T-cell (primary cell): ENCODE measurements at regions of chr7 and their contacts with region 1.

Region 1: DNA sequence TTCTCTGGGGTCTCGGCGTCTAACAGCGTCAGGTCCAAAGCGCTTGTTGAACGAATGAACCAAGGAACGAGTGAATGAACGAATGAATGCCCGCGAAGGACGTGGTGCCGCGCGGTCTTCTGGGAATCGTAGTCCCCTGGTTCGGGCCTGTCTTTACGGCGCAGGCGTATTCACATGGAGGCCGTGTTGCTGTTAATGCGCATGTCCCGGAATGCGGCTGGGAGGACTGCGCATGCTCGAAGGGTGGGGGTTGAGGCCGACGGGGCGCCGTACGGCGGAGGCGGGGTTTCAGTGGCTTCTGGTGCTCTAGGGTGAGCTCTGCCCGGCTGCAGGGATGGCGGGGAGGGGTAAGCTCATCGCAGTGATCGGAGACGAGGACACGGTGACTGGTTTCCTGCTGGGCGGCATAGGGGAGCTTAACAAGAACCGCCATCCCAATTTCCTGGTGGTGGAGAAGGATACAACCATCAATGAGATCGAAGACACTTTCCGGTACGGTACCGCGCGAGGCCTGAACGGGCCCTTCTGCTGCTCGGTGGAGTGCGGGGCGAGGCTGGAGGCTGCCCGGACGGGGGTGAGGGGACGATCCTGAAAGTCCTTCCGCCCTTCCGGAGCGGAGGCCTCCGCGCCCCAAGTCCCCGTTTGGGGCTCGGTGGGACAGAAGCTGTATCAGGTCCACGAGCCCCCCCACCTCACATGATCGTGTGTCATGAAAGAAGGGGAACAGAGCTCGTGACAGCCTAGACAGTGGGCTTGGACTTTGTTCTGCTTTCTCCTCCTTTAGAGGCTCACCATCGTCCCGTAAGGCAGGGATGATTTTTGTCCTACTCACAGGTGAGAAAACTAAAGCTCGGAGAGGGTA is at the start of gene ATP6V1F:
- DNase-seq: peak; percentile 94 to 100 (median 98)
- ATAC-seq: peak; percentile 92 to 95 (median 94)
- H3K4me3 ChIP-seq: peak within 1 kb of the TSS; percentile 88 to 98
- H3K4me3 Mint-ChIP-seq: peak within 1 kb of the TSS; percentile 95 to 96 (median 96)
- H3K27ac ChIP-seq: peak within 1 kb of the TSS; percentile 61
- H3K27ac Mint-ChIP-seq: peak within 1 kb of the TSS; percentile 90 to 92
- H3K4me1 ChIP-seq: peaks cover 5 to 26% of the 10 kb centered on the region in 2 experiments
- H3K4me1 Mint-ChIP-seq: peaks cover 26 to 36% (median 35%) of the 10 kb centered on the region in 3 donors
- H3K27me3 ChIP-seq: no peaks in the 10 kb centered on the region
- H3K27me3 Mint-ChIP-seq: no peaks in the 10 kb centered on the region
- total RNA-seq, gene ATP6V1F: 62.6 to 78.1 (median 75.5) TPM

Region 2: GRCh38 chr7:127589896-127590295 is 1272.9 kb before region 1 on chr7:
- CTCF ChIA-PET with region 1: no interaction called
- POLR2A ChIA-PET with region 1: interaction called in 1 of 2 experiments, 14 read pairs
- DNase-seq: no peak
- ATAC-seq: no peak
- H3K4me3 ChIP-seq: no peak overlapping the region
- H3K4me3 Mint-ChIP-seq: peak overlapping the region; percentile 91 to 92 (median 91)
- H3K27ac ChIP-seq: no peak overlapping the region
- H3K27ac Mint-ChIP-seq: no peak overlapping the region
- H3K4me1 ChIP-seq: peaks cover 4 to 35% of the 10 kb centered on the region in 2 experiments
- H3K4me1 Mint-ChIP-seq: peaks cover 36 to 44% (median 38%) of the 10 kb centered on the region in 3 donors
- H3K27me3 ChIP-seq: no peaks in the 10 kb centered on the region
- H3K27me3 Mint-ChIP-seq: no peaks in the 10 kb centered on the region

Region 3: DNA sequence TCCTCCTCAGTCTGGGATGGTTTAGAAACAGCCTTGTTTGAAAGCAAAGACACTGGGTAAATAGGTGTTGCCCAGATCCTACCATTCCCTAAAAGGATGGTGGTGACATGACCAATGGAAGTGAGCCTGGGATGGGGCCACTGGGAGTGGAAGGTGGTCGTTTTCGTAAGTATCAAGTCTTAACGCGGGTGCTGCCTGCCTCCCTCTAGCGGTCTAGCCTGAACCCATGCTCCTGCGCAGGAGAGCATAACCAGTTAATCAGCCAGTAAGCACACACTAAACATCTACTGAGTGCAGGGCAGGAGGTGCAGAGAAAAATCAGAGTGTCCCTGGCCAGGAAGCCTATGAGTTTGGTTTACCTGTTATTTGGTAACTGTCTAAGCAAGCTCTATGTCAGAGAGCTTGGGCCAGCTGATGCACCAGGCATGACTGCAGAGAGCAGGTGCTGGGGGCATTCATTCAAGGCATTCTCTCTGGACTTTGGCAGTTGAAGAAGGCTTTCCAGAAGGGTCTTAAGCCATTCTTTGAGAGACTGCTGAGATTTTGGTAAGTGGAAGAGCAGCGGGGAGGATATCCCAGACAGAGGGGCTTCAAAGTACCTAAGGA is 189.8 kb before region 1 on chr7:
- CTCF ChIA-PET with region 1: no interaction called
- POLR2A ChIA-PET with region 1: no interaction called
- DNase-seq: peak in 9 of 35 experiments; percentile 3 to 28 (median 8)
- ATAC-seq: peak; percentile 23 to 61 (median 42)
- H3K4me3 ChIP-seq: no peak overlapping the region
- H3K4me3 Mint-ChIP-seq: no peak overlapping the region
- H3K27ac ChIP-seq: no peak overlapping the region
- H3K27ac Mint-ChIP-seq: no peak overlapping the region
- H3K4me1 ChIP-seq: peaks cover 0 to 5% of the 10 kb centered on the region in 2 experiments
- H3K4me1 Mint-ChIP-seq: peaks cover 4 to 10% (median 7%) of the 10 kb centered on the region in 3 donors
- H3K27me3 ChIP-seq: peaks cover 4 to 35% of the 10 kb centered on the region in 2 experiments
- H3K27me3 Mint-ChIP-seq: peaks cover 10 to 23% of the 10 kb centered on the region in 2 donors

Region 4: GRCh38 chr7:128705891-128706333 is 156.9 kb before region 1 on chr7:
- CTCF ChIA-PET with region 1: no interaction called
- POLR2A ChIA-PET with region 1: no interaction called
- DNase-seq: no peak
- ATAC-seq: no peak
- H3K4me3 ChIP-seq: no peak overlapping the region
- H3K4me3 Mint-ChIP-seq: no peak overlapping the region
- H3K27ac ChIP-seq: no peak overlapping the region
- H3K27ac Mint-ChIP-seq: no peak overlapping the region
- H3K4me1 ChIP-seq: no peaks in the 10 kb centered on the region
- H3K4me1 Mint-ChIP-seq: peaks cover 0 to 6% (median 0%) of the 10 kb centered on the region in 3 donors
- H3K27me3 ChIP-seq: no peaks in the 10 kb centered on the region
- H3K27me3 Mint-ChIP-seq: peaks cover 3 to 5% of the 10 kb centered on the region in 2 donors

Region 5: DNA sequence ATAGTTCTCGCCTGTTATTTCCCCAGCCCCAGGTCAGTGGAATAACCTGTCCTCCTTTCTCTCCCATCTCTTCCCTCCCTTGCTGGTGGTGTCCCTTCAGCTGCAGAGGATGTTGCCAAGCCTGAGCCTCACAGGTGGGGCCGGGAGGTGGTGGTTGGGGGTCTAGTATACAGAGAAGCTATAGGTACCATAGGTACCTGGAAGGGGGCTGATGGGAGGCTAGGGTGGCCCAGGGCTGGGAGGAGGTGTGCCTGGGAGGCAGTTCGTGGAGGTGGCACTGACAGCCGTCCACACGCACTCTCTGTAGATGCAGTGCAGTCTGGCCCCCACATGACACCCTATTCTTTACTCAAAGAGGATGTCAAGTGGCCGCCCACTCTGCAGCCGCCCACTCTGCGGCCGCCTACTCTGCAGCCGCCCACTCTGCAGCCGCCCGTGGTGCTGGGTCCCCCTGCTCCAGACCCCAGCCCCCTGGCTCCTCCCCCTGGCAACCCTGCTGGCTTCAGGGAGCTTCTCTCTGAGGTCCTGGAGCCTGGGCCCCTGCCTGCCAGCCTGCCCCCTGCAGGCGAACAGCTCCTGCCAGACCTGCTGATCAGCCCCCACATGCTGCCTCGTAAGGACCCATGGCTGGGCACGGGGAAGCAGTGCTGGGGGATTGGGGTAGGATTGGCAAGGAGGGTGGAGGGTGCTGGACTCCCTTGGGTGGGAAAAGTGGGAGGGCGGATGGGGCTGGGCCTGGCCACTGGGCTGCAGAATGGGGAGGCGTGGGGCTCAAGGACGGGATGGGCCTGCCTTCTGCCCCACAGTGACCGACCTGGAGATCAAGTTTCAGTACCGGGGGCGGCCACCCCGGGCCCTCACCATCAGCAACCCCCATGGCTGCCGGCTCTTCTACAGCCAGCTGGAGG is 84.4 kb after region 1 on chr7:
- CTCF ChIA-PET with region 1: interaction called in 1 of 2 experiments, 3 read pairs
- POLR2A ChIA-PET with region 1: interaction called in 1 of 2 experiments, 19 read pairs
- DNase-seq: peak in 1 of 35 experiments; percentile 16
- ATAC-seq: no peak
- H3K4me3 ChIP-seq: no peak overlapping the region
- H3K4me3 Mint-ChIP-seq: no peak overlapping the region
- H3K27ac ChIP-seq: no peak overlapping the region
- H3K27ac Mint-ChIP-seq: no peak overlapping the region
- H3K4me1 ChIP-seq: no peaks in the 10 kb centered on the region
- H3K4me1 Mint-ChIP-seq: no peaks in the 10 kb centered on the region
- H3K27me3 ChIP-seq: no peaks in the 10 kb centered on the region
- H3K27me3 Mint-ChIP-seq: no peaks in the 10 kb centered on the region